Caco-2 (cell line): ENCODE measurements at regions of chr6 and their contacts with region 1.

Region 1: GRCh38 chr6:146985111-146985510 is 219.1 kb upstream of the STXBP5 start:
- DNase-seq: peak; percentile 66 to 74
- H3K4me3 ChIP-seq: no peak overlapping the region
- H3K4me3 Mint-ChIP-seq: peak overlapping the region; percentile 58
- H3K27ac Mint-ChIP-seq: peak overlapping the region; percentile 83
- H3K4me1 ChIP-seq: peaks cover 59% of the 10 kb centered on the region
- H3K4me1 Mint-ChIP-seq: peaks cover 40% of the 10 kb centered on the region
- H3K27me3 ChIP-seq: no peaks in the 10 kb centered on the region
- H3K27me3 Mint-ChIP-seq: no peaks in the 10 kb centered on the region
- CTCF ChIP-seq: no peak

Region 2: DNA sequence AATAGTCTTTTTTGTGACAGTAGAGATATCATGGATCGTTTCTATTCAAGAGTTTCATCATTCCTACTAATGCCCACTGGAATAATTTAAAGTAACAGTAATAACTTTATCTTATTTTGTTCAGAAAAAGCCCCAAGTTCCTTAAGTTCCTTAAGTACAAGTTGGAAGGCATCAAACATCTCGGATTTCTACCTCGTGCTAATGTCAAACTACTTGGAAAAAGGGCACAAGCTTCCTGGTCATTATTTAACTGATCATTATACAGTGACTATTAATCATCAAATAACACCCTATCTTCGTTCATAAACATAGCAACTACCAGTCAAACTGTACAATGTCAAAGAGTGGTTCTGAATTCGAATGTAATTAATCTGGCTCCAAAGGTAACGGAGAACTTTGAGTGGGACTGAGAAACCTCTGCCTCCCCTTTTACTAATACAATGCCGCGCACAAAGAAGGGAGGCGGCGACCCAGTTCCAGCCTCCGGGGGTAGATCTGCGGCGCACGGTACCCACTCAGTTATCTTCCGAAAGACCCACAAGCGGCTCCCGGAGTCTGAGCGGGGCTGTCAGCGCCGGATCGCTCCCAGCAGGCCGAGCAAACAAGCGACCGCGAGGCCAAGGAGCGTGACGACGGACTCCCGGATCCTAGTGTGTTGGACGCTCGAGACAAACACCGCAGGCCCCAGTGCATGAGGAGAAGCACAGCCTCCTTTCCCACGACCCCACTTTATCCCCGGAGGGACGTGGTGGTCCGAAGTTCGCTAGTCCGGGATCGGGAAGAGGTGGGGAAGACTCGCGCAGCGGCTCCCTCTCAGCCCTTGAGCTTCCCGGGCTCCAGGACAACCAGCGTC is 1021.7 kb before region 1 on chr6:
- CTCF ChIA-PET with region 1: no interaction called
- POLR2A ChIA-PET with region 1: no interaction called
- intact Hi-C with region 1: loop called (anchors 2 kb)
- DNase-seq: peak in 1 of 2 experiments; percentile 59
- H3K4me3 ChIP-seq: peak overlapping the region; percentile 59
- H3K4me3 Mint-ChIP-seq: peak overlapping the region; percentile 95
- H3K27ac Mint-ChIP-seq: peak overlapping the region; percentile 92
- H3K4me1 ChIP-seq: peaks cover 22% of the 10 kb centered on the region
- H3K4me1 Mint-ChIP-seq: peaks cover 13% of the 10 kb centered on the region
- H3K27me3 ChIP-seq: no peaks in the 10 kb centered on the region
- H3K27me3 Mint-ChIP-seq: no peaks in the 10 kb centered on the region
- CTCF ChIP-seq: no peak

Region 3: DNA sequence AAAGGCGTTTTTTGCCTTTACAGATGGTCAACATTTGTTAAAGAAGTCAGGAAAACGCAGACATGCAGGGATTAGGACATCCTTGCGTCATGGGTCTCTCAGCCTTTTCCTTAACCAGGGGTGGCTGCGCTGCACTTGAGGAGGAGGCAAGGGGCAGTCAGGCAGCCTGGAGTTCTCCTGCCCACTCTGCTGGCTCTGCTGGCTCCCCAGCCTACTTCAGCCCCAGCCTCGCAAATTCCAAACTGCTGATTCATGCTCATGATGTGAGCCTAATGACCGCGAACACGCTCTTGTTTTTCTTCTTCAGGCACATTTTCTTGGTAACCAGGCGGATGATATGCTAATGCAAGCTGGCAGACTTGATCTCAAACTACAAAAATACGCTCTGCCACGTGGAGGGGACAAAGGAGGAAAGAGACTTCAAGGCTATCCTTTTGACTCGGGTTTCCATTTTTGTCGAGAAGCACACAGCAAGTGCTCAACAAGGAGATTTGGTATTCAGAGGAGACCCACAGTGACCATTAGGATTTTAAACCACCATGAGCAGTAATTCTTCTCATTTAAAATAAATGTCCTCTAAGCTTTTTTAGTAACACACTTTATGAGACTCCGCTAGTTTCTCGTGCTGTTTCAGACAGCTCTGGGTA is 71.1 kb before region 1 on chr6:
- CTCF ChIA-PET with region 1: no interaction called
- POLR2A ChIA-PET with region 1: no interaction called
- intact Hi-C with region 1: loop called (anchors 2 kb)
- DNase-seq: peak; percentile 48 to 70
- H3K4me3 ChIP-seq: no peak overlapping the region
- H3K4me3 Mint-ChIP-seq: peak overlapping the region; percentile 55
- H3K27ac Mint-ChIP-seq: peak overlapping the region; percentile 84
- H3K4me1 ChIP-seq: peaks cover 16% of the 10 kb centered on the region
- H3K4me1 Mint-ChIP-seq: peaks cover 6% of the 10 kb centered on the region
- H3K27me3 ChIP-seq: no peaks in the 10 kb centered on the region
- H3K27me3 Mint-ChIP-seq: no peaks in the 10 kb centered on the region
- CTCF ChIP-seq: no peak

Region 4: DNA sequence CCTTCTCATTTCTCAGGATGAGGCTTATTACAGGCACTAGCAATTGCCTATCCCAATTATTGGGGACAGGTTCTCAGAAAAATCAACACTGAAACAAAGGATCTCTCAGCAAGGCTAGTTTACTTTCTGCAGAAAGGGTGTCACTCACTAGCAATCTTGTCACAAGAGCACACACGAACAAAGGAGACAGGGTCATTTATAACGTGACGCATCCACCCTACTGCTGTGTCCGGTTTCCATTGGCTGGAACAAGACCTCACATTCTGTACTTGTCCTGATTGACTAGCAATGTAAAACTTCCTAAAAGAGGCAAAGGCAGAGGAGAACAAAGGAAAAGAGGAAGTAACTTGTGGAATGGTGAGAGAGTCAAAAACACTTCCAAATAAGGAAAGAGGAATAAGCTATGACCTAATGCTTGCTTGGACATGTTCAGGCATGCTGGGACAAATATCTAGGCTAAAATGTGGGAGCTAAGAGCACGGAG is 58.9 kb after region 1 on chr6:
- CTCF ChIA-PET with region 1: no interaction called
- POLR2A ChIA-PET with region 1: no interaction called
- intact Hi-C with region 1: loop called (anchors 2 kb)
- DNase-seq: no peak
- H3K4me3 ChIP-seq: no peak overlapping the region
- H3K4me3 Mint-ChIP-seq: no peak overlapping the region
- H3K27ac Mint-ChIP-seq: no peak overlapping the region
- H3K4me1 ChIP-seq: no peaks in the 10 kb centered on the region
- H3K4me1 Mint-ChIP-seq: no peaks in the 10 kb centered on the region
- H3K27me3 ChIP-seq: no peaks in the 10 kb centered on the region
- H3K27me3 Mint-ChIP-seq: no peaks in the 10 kb centered on the region
- CTCF ChIP-seq: no peak

Region 5: DNA sequence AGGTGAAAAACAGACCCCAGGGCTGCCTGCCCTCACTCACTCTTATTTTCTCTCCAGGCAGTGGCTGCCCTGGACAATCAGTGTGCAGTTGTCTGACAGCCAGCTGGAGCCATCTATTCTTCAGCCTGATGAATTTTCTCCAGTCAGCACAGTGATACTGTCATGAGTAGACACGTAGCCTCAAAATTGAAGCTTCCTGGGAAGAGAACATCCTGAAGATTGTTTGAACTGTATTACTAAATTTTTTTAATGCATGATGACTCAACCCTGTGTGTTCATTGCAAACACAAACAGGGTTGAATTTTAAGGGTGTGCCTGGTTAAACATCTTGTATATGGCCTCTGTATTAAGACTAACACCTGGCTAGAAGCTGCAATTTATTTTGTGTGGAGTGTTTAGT is 169.3 kb after region 1 on chr6:
- CTCF ChIA-PET with region 1: no interaction called
- POLR2A ChIA-PET with region 1: no interaction called
- intact Hi-C with region 1: loop called (anchors 5 kb)
- DNase-seq: no peak
- H3K4me3 ChIP-seq: no peak overlapping the region
- H3K4me3 Mint-ChIP-seq: no peak overlapping the region
- H3K27ac Mint-ChIP-seq: no peak overlapping the region
- H3K4me1 ChIP-seq: peaks cover 12% of the 10 kb centered on the region
- H3K4me1 Mint-ChIP-seq: peaks cover 21% of the 10 kb centered on the region
- H3K27me3 ChIP-seq: no peaks in the 10 kb centered on the region
- H3K27me3 Mint-ChIP-seq: no peaks in the 10 kb centered on the region
- CTCF ChIP-seq: no peak

Region 6: GRCh38 chr6:147285087-147285855 is 300.2 kb after region 1 on chr6:
- CTCF ChIA-PET with region 1: no interaction called
- POLR2A ChIA-PET with region 1: no interaction called
- intact Hi-C with region 1: loop called (anchors 1 kb)
- DNase-seq: no peak
- H3K4me3 ChIP-seq: no peak overlapping the region
- H3K4me3 Mint-ChIP-seq: no peak overlapping the region
- H3K27ac Mint-ChIP-seq: no peak overlapping the region
- H3K4me1 ChIP-seq: peaks cover 6% of the 10 kb centered on the region
- H3K4me1 Mint-ChIP-seq: peaks cover 6% of the 10 kb centered on the region
- H3K27me3 ChIP-seq: no peaks in the 10 kb centered on the region
- H3K27me3 Mint-ChIP-seq: no peaks in the 10 kb centered on the region
- CTCF ChIP-seq: peak; percentile 24 to 38